Heart left ventricle (tissue), 16 donors: ENCODE measurements at regions of chr21 and their contacts with region 1.

Region 1: DNA sequence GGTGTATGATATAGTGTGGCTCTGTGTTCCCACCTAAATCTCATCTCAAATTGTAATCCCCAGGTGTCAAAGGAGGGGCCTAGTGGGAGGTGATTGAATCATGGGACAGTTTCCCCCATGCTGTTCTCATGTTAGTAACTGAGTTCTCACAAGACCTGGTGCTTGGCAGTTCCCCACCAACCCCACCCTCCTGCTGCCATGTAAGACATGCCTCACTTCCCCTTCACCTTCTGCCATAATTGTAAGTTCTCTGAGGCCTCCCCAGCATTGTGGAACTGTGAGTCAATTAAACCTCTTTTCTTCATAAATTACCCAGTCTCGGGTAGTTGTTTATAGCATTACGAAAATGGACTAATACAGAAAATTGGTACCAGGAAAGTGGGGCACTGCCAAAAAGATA is 1705.3 kb downstream of the NCAM2 start:
- DNase-seq: no peak
- ATAC-seq: no peak
- H3K4me3 ChIP-seq: no peak overlapping the region
- H3K27ac ChIP-seq: no peak overlapping the region
- H3K4me1 ChIP-seq: no peaks in the 10 kb centered on the region
- H3K27me3 ChIP-seq: no peaks in the 10 kb centered on the region
- CTCF ChIP-seq: no peak
- POLR2A ChIP-seq: no peak

Region 2: DNA sequence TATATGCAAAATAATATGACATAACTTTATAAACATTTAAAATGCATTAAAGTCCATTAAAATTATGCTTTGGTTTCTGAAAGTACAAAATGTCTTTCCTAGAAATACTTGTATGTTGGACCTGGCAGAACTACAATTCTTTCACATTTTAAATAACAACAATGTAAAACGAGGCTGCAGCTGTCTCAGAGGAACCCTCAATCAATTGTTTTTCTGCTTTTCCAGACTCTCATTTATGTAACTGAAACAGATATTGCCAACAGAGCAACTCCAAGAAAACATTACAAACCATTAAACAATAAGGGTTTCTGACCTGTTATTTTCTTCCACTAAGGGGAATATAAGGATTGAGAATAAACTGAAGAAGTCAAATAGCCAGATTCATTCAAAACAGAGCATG is 511.9 kb before region 1 on chr21:
- intact Hi-C with region 1: no loop called
- DNase-seq: no peak
- ATAC-seq: no peak
- H3K4me3 ChIP-seq: no peak overlapping the region
- H3K27ac ChIP-seq: no peak overlapping the region
- H3K4me1 ChIP-seq: no peaks in the 10 kb centered on the region
- H3K27me3 ChIP-seq: no peaks in the 10 kb centered on the region
- CTCF ChIP-seq: no peak
- POLR2A ChIP-seq: no peak

Region 3: GRCh38 chr21:22657781-22658180 is 45.7 kb before region 1 on chr21:
- intact Hi-C with region 1: loop called in 1 of 10 experiments (anchors 10 kb)
- DNase-seq: no peak
- ATAC-seq: no peak
- H3K4me3 ChIP-seq: no peak overlapping the region
- H3K27ac ChIP-seq: no peak overlapping the region
- H3K4me1 ChIP-seq: no peaks in the 10 kb centered on the region
- H3K27me3 ChIP-seq: no peaks in the 10 kb centered on the region
- CTCF ChIP-seq: no peak
- POLR2A ChIP-seq: no peak